ENCODE measurements at regions of chr18 and their contacts with region 1.

Region 1: DNA sequence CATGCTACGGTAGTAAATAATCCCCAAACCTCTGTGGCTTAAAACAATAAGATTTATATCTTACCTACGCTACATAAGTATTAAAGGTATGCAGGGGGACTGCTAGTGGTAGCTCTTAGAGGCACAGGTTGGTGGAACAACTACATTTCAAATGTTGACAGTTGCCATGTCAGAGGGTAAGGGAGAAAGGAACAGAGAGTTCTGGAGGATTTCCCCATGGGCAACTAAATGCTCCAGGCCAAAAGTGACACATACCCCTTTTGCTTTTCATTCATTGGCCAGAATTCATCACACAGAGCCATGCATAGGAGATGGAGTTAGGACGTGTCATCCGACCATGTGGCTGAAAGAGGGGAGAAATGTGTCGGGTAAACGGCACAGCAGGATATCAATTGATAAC is 133.2 kb downstream of the NAPG start:
- DNase-seq: no peak
- ATAC-seq: no peak
- H3K4me3 ChIP-seq: no peak overlapping the region
- H3K27ac ChIP-seq: no peak overlapping the region
- H3K4me1 ChIP-seq: no peaks in the 10 kb centered on the region; a peak in 1 of 5 replicates
- H3K27me3 ChIP-seq: peaks cover 34 to 45% of the 10 kb centered on the region in 2 experiments
- CTCF ChIP-seq: no peak
- EP300 ChIP-seq: no peak
- POLR2A ChIP-seq: no peak
- RAD21 ChIP-seq: no peak

Region 2: GRCh38 chr18:10343778-10344177 is 315.2 kb before region 1 on chr18:
- CTCF ChIA-PET with region 1: no interaction called
- POLR2A ChIA-PET with region 1: no interaction called
- in situ Hi-C with region 1: no loop called
- intact Hi-C with region 1: no loop called
- DNase-seq: no peak
- ATAC-seq: no peak; the same call in 1 of the 3 replicates
- H3K4me3 ChIP-seq: no peak overlapping the region
- H3K27ac ChIP-seq: no peak overlapping the region
- H3K4me1 ChIP-seq: no peaks in the 10 kb centered on the region
- H3K27me3 ChIP-seq: peaks cover 25 to 56% of the 10 kb centered on the region in 2 experiments
- CTCF ChIP-seq: no peak
- EP300 ChIP-seq: no peak
- POLR2A ChIP-seq: no peak
- RAD21 ChIP-seq: no peak

Region 3: GRCh38 chr18:11027862-11028261 is 368.9 kb after region 1 on chr18:
- CTCF ChIA-PET with region 1: no interaction called
- POLR2A ChIA-PET with region 1: no interaction called
- in situ Hi-C with region 1: no loop called
- intact Hi-C with region 1: no loop called
- DNase-seq: no peak
- ATAC-seq: no peak
- H3K4me3 ChIP-seq: no peak overlapping the region
- H3K27ac ChIP-seq: no peak overlapping the region
- H3K4me1 ChIP-seq: no peaks in the 10 kb centered on the region
- H3K27me3 ChIP-seq: peaks cover 0 to 14% of the 10 kb centered on the region in 2 experiments; a peak in 2 of 5 replicates
- CTCF ChIP-seq: no peak
- EP300 ChIP-seq: no peak
- POLR2A ChIP-seq: no peak
- RAD21 ChIP-seq: no peak

Region 4: GRCh38 chr18:12165038-12165768 is 1506.2 kb after region 1 on chr18:
- CTCF ChIA-PET with region 1: no interaction called
- POLR2A ChIA-PET with region 1: no interaction called
- in situ Hi-C with region 1: loop called (anchors 5 kb)
- intact Hi-C with region 1: no loop called
- DNase-seq: no peak
- ATAC-seq: no peak
- H3K4me3 ChIP-seq: no peak overlapping the region
- H3K27ac ChIP-seq: no peak overlapping the region
- H3K4me1 ChIP-seq: no peaks in the 10 kb centered on the region
- H3K27me3 ChIP-seq: no peaks in the 10 kb centered on the region
- CTCF ChIP-seq: no peak
- EP300 ChIP-seq: no peak
- POLR2A ChIP-seq: no peak
- RAD21 ChIP-seq: no peak

Measured in K562 (cell line).